ENCODE measurements at regions of chr6 and their contacts with region 1.

Region 1: GRCh38 chr6:42879372-42880239 is at the start of gene RPL7L1:
- DNase-seq: peak; percentile 50 to 90
- ATAC-seq: peak; percentile 97 to 98
- H3K4me3 ChIP-seq: peak within 1 kb of the TSS; percentile 85
- H3K27ac ChIP-seq: peak within 1 kb of the TSS; percentile 97 to 99
- H3K4me1 ChIP-seq: peaks cover 21% of the 10 kb centered on the region; the same call in 2 of the 3 replicates
- CTCF ChIP-seq: no peak
- EP300 ChIP-seq: no peak
- POLR2A ChIP-seq: peak; percentile 58
- RAD21 ChIP-seq: no peak
- polyA plus RNA-seq, gene RPL7L1: 46.4 and 65.2 TPM in 2 replicates

Region 2: DNA sequence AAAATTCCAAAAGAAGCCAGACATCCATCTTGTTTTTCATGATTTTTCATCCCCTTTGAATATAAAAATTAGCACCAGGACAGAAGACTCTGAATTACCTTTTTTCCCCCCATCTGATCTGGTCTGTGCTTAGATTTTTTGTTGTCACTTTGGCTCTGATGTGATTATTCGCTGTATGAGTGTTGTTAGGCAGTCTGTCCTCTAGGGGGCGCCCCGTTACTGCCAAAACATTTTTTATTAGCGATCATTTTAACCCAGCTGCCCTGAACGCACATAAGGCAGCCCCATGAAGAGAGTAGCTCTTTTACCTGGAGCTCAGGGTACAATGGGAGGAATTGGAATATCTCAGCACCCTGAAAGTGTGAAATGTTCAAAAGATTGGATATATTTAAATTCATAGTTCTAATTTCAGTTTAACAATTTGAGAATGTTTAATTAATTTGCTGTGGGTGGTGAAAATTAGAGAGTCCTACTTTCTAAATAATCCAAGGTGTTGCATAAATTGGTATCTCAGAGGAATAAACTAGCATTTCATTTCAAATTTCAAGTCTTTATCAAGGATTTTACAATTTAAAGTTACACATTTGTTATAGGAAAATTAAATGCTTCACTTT is 218.0 kb before region 1 on chr6:
- CTCF ChIA-PET with region 1: interaction called, 45 read pairs
- POLR2A ChIA-PET with region 1: no interaction called
- DNase-seq: peak; percentile 18 to 60
- ATAC-seq: peak; percentile 62 to 81; a peak in 4 of 6 replicates
- H3K4me3 ChIP-seq: no peak overlapping the region
- H3K27ac ChIP-seq: no peak overlapping the region
- H3K4me1 ChIP-seq: no peaks in the 10 kb centered on the region
- CTCF ChIP-seq: peak; percentile 80
- EP300 ChIP-seq: no peak
- POLR2A ChIP-seq: no peak
- RAD21 ChIP-seq: peak; percentile 81 to 83

Region 3: GRCh38 chr6:42692137-42692911 is 187.3 kb before region 1 on chr6:
- CTCF ChIA-PET with region 1: interaction called, 13 read pairs
- POLR2A ChIA-PET with region 1: no interaction called
- DNase-seq: no peak
- ATAC-seq: no peak
- H3K4me3 ChIP-seq: no peak overlapping the region
- H3K27ac ChIP-seq: no peak overlapping the region
- H3K4me1 ChIP-seq: no peaks in the 10 kb centered on the region
- CTCF ChIP-seq: no peak
- EP300 ChIP-seq: no peak
- POLR2A ChIP-seq: no peak
- RAD21 ChIP-seq: no peak

Region 4: GRCh38 chr6:42745707-42746462 is 133.7 kb before region 1 on chr6 and contains the start of gene TBCC:
- CTCF ChIA-PET with region 1: interaction called, 3 read pairs
- POLR2A ChIA-PET with region 1: interaction called, 10 read pairs
- DNase-seq: peak; percentile 98
- ATAC-seq: peak; percentile 82 to 88
- H3K4me3 ChIP-seq: peak within 1 kb of the TSS; percentile 73
- H3K27ac ChIP-seq: peak within 1 kb of the TSS; percentile 94 to 98
- H3K4me1 ChIP-seq: peaks cover 18% of the 10 kb centered on the region
- CTCF ChIP-seq: no peak
- EP300 ChIP-seq: no peak
- POLR2A ChIP-seq: peak; percentile 93
- RAD21 ChIP-seq: no peak
- polyA plus RNA-seq, gene TBCC: 10.2 and 10.3 TPM in 2 replicates

Region 5: DNA sequence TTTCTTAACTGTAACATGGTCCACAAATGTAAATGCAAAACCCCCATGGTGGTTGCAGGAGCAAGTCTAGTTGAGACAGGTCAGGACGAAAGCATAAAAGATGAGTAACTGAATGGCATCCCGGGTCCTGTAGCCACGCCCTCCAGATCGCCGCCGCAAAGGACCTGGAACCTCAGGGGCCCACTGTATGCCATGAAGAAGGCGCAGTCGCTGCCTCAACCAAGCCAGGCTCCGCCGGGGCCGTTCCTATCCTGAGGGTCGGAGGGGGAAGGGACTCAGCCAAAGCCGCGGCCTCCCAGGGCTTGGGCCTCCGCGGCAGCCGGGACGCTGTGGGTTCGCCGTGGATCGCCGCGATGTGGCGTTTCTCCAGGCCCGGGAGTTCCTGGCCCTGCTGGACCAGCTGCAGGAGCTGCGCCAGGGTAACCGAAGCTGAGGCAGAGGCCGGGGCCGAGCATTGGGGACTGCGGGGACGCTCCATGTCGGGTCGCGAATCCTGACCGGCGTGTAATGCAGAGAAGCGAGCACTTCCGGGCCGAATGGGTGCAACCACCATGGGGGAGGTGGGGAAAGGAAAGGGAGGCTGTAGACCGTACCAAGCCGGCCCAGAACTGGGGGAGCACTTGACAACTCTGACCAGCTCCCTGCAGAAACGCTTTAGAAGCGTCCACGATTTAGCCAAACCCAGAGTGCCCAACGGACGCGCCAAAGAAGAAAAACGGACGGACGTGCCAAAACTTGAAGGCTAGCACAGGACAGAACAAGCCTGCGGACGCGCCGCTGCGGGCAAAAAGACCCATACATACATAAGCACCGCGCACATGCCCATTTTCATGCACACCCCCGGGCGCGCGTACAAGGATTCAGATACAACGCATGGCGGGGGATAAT is 10.9 kb after region 1 on chr6:
- CTCF ChIA-PET with region 1: interaction called, 4 read pairs
- POLR2A ChIA-PET with region 1: interaction called, 22 read pairs
- DNase-seq: peak; percentile 79 to 95
- ATAC-seq: peak; percentile 94 to 95
- H3K4me3 ChIP-seq: peak overlapping the region; percentile 80
- H3K27ac ChIP-seq: peak overlapping the region; percentile 98 to 99
- H3K4me1 ChIP-seq: peaks cover 8% of the 10 kb centered on the region; the same call in 2 of the 3 replicates
- CTCF ChIP-seq: no peak
- EP300 ChIP-seq: no peak
- POLR2A ChIP-seq: peak; percentile 80
- RAD21 ChIP-seq: no peak

Region 6: DNA sequence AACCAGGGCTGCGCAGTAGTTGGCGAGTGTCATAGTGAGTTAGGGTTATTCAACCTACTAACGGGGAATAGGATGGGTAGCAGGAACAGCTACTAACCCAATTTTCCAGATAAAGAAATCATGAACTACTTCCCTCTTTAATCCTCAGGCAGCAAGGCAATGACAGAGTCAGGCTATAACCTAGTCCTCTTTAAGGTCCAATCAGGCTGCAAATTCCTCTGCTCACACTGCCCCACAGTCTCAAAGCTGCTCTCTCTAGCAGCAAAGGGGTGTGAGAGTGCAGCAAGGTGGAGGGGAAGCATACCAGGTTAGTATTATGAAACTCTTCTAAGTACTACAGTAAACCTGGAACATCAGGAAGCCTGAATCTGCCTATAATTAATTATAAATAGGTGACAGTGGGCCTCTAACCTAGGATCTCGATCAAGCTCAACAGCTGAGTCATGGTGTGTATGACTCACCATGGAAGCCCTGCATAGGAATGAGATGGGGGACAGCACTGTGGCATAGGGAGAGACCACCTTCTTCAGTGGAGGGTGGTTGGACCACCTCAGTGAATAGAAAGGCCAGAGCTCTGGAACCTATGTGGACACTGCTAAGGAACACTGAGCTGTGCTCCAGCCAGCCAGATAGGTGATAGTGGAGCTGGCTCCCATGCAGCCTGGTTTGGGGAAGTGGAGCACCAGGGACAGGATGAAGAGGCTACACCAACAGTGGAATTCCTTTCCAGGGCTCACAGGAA is 91.4 kb after region 1 on chr6:
- CTCF ChIA-PET with region 1: no interaction called
- POLR2A ChIA-PET with region 1: no interaction called
- DNase-seq: peak in 1 of 2 experiments; percentile 13
- ATAC-seq: peak; percentile 68 to 73; a peak in 5 of 6 replicates
- H3K4me3 ChIP-seq: no peak overlapping the region
- H3K27ac ChIP-seq: peak overlapping the region; percentile 72 to 77
- H3K4me1 ChIP-seq: peaks cover 20% of the 10 kb centered on the region
- CTCF ChIP-seq: no peak
- EP300 ChIP-seq: no peak
- POLR2A ChIP-seq: no peak
- RAD21 ChIP-seq: no peak

Region 7: GRCh38 chr6:43170417-43171283 is 291.0 kb after region 1 on chr6 and contains the start of gene SRF:
- CTCF ChIA-PET with region 1: no interaction called
- POLR2A ChIA-PET with region 1: no interaction called
- DNase-seq: peak; percentile 67 to 98
- ATAC-seq: peak; percentile 75 to 81
- H3K4me3 ChIP-seq: peak within 1 kb of the TSS; percentile 92
- H3K27ac ChIP-seq: peak within 1 kb of the TSS; percentile 92 to 100
- H3K4me1 ChIP-seq: peaks cover 30% of the 10 kb centered on the region
- CTCF ChIP-seq: no peak
- EP300 ChIP-seq: no peak
- POLR2A ChIP-seq: peak; percentile 39; the same call in 1 of the 2 replicates
- RAD21 ChIP-seq: no peak
- polyA plus RNA-seq, gene SRF: 16.2 and 16.7 TPM in 2 replicates